B cell (primary cell): ENCODE measurements at regions of chr1 and their contacts with region 1.

Region 1: GRCh38 chr1:231337472-231338269 is at the start of gene EXOC8:
- DNase-seq: peak; percentile 99
- ATAC-seq: peak; percentile 83
- H3K4me3 ChIP-seq: peak within 1 kb of the TSS; percentile 68 to 96 (median 94)
- H3K4me3 Mint-ChIP-seq: peak within 1 kb of the TSS; percentile 99
- H3K27ac ChIP-seq: peak within 1 kb of the TSS; percentile 93 to 99
- H3K27ac Mint-ChIP-seq: peak within 1 kb of the TSS; percentile 100
- H3K4me1 ChIP-seq: peaks cover 46 to 54% of the 10 kb centered on the region in 2 donors
- H3K4me1 Mint-ChIP-seq: peaks cover 59% of the 10 kb centered on the region
- H3K27me3 ChIP-seq: no peaks in the 10 kb centered on the region
- H3K27me3 Mint-ChIP-seq: peaks cover 3% of the 10 kb centered on the region
- CTCF ChIP-seq: no peak
- total RNA-seq, gene EXOC8: 32.5 and 32.6 TPM in 2 replicates

Region 2: DNA sequence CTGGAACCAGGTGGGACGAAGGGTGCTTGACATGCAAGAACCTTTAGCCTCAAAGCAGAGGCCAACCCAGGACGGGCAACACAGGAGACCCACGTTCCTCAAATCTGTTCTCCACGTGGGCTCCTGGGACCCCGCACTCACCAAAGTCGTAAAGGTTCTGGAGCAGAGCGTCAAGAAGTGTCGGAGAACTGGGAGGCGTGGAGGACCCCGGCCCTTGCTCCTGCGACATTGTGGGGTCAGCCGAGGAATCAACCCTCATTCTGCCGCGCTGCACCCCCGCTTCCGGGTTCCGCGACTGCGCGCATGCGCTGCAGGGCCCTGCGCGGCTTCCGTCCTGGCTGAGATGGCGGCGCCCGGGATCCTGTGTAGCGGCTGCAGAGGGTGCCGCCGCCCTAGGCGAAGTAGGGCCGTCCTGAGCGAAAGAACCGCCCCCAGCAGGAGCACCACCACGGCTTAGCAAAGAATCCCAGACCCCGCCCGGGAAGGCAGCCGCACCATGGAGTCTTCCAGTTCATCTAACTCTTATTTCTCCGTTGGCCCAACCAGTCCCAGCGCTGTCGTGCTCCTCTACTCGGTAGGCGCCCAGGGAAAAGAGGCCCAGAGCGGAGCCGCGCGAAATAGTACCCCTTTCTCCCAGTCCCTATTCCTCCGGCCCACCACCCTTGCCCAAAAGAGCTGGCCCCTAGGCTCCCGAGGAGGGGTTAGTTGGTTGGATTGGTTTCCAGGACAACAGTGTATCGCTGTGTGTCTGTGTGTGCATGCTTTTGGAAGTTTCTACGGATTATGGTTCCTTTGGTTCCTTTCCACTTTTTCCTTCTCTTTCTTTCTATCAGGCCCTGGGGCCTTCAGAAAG is 96.6 kb before region 1 on chr1 and contains the start of gene GNPAT:
- CTCF ChIA-PET with region 1: no interaction called
- POLR2A ChIA-PET with region 1: no interaction called
- intact Hi-C with region 1: loop called (anchors 1 kb)
- DNase-seq: peak; percentile 93
- ATAC-seq: peak; percentile 96
- H3K4me3 ChIP-seq: peak within 1 kb of the TSS; percentile 78 to 92 (median 88)
- H3K4me3 Mint-ChIP-seq: peak within 1 kb of the TSS; percentile 96
- H3K27ac ChIP-seq: peak within 1 kb of the TSS; percentile 76 to 87
- H3K27ac Mint-ChIP-seq: peak within 1 kb of the TSS; percentile 95
- H3K4me1 ChIP-seq: peaks cover 23 to 29% of the 10 kb centered on the region in 2 donors
- H3K4me1 Mint-ChIP-seq: peaks cover 68% of the 10 kb centered on the region
- H3K27me3 ChIP-seq: no peaks in the 10 kb centered on the region
- H3K27me3 Mint-ChIP-seq: no peaks in the 10 kb centered on the region
- CTCF ChIP-seq: no peak
- total RNA-seq, gene GNPAT: 48.0 and 49.0 TPM in 2 replicates

Region 3: DNA sequence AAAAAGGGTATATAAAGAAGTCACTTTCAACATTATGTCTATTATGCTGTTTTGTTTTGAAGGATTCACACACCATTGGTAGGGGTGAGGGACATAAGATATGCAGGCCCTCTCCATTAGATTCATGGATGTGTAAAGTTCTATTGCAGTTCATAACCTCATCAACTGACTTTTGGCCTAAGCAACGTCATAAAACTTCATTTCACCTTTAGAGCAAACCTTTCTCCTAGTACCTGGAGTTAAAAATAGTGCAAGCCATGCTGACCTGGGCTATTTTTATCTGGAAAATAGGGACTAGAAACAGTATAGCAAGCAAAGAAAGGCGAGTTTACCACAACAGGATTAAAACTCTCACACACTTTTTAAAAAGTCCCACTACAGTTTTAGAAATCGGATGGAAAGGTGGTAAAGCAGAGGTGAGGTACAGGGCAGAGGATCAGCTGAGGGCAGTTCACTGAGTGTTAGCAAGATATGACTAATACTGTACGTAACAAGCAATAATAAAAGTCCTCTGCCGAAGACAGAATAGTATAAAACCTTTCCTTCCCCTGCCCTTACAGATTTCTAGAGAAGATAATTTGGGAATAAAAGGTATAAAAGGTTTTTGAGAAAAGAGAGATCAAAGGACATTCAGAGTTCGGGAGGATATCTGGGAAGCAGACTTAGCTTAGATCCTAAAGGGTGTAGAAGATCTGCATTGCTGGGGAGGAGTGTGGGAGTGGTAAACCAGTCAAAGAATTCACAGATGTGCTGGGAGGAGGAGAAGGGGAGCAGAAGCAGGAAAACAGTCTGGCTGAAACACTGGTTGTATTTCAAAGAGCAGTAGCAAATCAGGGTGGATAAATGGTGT is 70.1 kb after region 1 on chr1:
- CTCF ChIA-PET with region 1: no interaction called
- POLR2A ChIA-PET with region 1: no interaction called
- intact Hi-C with region 1: no loop called
- DNase-seq: no peak
- ATAC-seq: no peak
- H3K4me3 ChIP-seq: no peak overlapping the region
- H3K4me3 Mint-ChIP-seq: no peak overlapping the region
- H3K27ac ChIP-seq: no peak overlapping the region
- H3K27ac Mint-ChIP-seq: no peak overlapping the region
- H3K4me1 ChIP-seq: peaks cover 2 to 8% of the 10 kb centered on the region in 2 donors
- H3K4me1 Mint-ChIP-seq: peaks cover 23% of the 10 kb centered on the region
- H3K27me3 ChIP-seq: no peaks in the 10 kb centered on the region
- H3K27me3 Mint-ChIP-seq: no peaks in the 10 kb centered on the region
- CTCF ChIP-seq: no peak